ENCODE measurements at regions of chr22 and their contacts with region 1.

Region 1: GRCh38 chr22:33063611-33064010 is 5.4 kb upstream of the SYN3 start:
- DNase-seq: no peak
- CTCF ChIP-seq: no peak

Region 2: GRCh38 chr22:32957200-32957803 is 106.3 kb before region 1 on chr22:
- CTCF ChIA-PET with region 1: no interaction called
- POLR2A ChIA-PET with region 1: no interaction called
- DNase-seq: no peak
- CTCF ChIP-seq: no peak

Region 3: GRCh38 chr22:33035272-33035863 is 28.2 kb before region 1 on chr22:
- CTCF ChIA-PET with region 1: no interaction called
- POLR2A ChIA-PET with region 1: no interaction called
- DNase-seq: no peak
- CTCF ChIP-seq: no peak

Region 4: GRCh38 chr22:33049119-33049729 is 14.4 kb before region 1 on chr22:
- CTCF ChIA-PET with region 1: interaction called, 11 read pairs
- POLR2A ChIA-PET with region 1: no interaction called
- DNase-seq: peak; percentile 75
- CTCF ChIP-seq: peak; percentile 79

Region 5: GRCh38 chr22:33149611-33150010 is 86.0 kb after region 1 on chr22:
- CTCF ChIA-PET with region 1: no interaction called
- POLR2A ChIA-PET with region 1: no interaction called
- DNase-seq: no peak
- CTCF ChIP-seq: no peak

Region 6: DNA sequence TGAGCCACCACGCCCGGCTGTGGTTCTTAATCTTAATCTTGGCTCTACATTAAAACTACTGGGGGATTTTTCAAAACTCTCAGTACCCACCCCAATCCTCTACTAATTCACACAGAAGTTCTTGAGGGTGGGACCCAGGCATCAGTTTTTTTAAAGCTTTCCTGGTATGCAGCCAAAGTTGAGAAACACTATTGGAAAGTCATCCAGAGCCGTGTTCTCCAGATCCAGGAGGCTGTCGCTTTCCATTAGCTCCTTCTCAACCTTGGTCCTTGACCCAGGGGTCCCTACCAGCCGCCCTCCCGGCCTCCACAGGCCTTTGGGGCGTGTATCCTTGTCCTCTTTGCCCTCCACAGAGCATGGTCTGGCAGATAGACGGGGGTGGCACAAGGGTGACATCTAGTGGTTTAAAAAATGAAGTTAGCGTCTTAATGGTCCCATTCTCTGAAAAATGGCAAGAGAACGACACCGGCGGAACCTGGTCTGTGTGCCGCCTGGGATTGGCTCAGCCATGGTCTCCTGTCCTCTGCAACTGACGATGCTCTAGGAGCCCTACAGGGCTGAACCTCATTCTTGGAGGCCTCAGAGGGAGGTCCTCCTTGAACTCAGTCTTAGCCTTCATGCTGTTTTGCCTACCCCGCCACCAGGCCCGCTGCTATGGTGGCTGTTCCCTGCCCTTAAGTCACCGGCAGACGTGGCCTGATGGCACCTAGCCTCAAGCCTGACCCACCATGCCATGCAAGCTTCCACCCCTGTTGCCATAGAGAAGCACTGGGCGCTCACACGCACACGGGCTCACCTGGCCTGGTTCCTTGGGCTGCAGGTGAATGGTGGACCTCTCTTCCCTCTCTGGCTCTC is 146.5 kb after region 1 on chr22:
- CTCF ChIA-PET with region 1: no interaction called
- POLR2A ChIA-PET with region 1: no interaction called
- DNase-seq: peak; percentile 83
- CTCF ChIP-seq: peak; percentile 54

Measured in GM10248 (cell line).